Dorsolateral prefrontal cortex (tissue), 120 donors: ENCODE measurements at regions of chr11 and their contacts with region 1.

Region 1: DNA sequence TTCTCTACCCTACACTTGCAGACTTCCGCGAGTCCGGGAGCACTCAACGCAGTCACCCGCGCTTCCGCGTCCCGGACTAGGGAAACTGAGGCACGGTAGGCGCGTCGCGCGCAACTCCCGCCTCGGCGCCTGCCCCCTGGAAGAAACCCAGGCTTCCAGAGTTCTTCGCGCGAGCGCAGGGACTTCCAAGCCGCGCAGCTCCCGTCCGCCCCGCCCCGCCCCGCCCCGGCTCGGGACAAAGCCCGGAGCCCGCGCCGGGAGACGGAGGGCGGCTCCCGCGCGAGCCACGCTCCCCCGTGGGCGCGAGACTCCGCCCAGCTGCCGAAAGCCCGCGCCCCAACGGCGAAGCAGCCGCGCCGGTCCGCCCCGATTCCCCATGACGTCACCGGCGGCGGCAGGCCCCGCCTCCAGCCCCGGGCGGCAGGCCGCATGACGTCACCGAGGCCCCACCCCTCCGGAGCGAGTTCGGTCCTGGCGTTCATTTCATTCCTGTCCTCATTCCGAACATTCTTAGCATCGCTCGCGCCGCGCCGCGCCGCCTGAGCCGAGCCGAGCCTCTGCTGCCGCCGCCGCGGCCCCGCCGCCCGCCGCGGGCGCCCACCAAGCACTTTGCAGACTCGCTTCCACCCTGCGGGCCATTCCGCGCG is at the start of gene TEAD1:
- DNase-seq: peak; percentile 93 to 99 (median 96)
- H3K4me3 ChIP-seq: peak within 1 kb of the TSS; percentile 55 to 92 (median 82)
- H3K27ac ChIP-seq: peak within 1 kb of the TSS in 58 of 59 donors; percentile 42 to 95 (median 88)
- H3K27me3 ChIP-seq: no peaks in the 10 kb centered on the region
- CTCF ChIP-seq: peak in 24 of 56 donors; percentile 3 to 57 (median 22)
- total RNA-seq, gene TEAD1: 22.9 to 101 (median 43.9) TPM

Region 2: GRCh38 chr11:12100841-12101242 is 573.2 kb before region 1 on chr11:
- intact Hi-C with region 1: loop called in 1 of 2 experiments (anchors 10 kb)
- DNase-seq: peak in 9 of 10 donors; percentile 74 to 93 (median 79)
- H3K4me3 ChIP-seq: peak overlapping the region in 1 of 59 donors; percentile 25
- H3K27ac ChIP-seq: peak overlapping the region in 3 of 59 donors; percentile 42 to 52 (median 51)
- H3K27me3 ChIP-seq: peaks cover 0 to 4% (median 0%) of the 10 kb centered on the region in 45 donors
- CTCF ChIP-seq: peak in 14 of 56 donors; percentile 12 to 41 (median 24)

Region 3: DNA sequence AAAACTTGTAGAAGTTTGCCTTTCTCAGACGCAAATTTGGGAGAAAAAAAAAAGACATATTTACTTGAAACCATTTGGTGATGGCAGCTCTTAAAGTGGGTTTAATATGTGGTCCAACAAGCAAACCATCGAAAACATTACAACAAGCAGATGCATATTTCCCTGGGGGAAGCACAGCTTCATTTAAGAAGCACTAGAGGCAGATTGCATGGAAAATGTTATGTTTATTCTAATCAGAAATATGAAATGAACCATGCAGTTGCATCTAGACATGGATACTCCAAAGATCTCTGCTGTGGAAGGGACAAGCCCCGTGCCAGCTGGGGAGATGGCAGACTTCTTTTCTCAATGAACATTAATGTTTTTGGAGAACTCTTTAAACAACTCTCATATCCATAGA is 354.1 kb before region 1 on chr11:
- intact Hi-C with region 1: loop called in 1 of 2 experiments (anchors 10 kb)
- DNase-seq: no peak
- H3K4me3 ChIP-seq: no peak overlapping the region
- H3K27ac ChIP-seq: no peak overlapping the region
- H3K27me3 ChIP-seq: peaks cover 0 to 24% (median 0%) of the 10 kb centered on the region in 45 donors
- CTCF ChIP-seq: no peak

Region 4: GRCh38 chr11:12331239-12331874 is 342.7 kb before region 1 on chr11:
- intact Hi-C with region 1: loop called (anchors 2 to 10 kb)
- DNase-seq: peak; percentile 69 to 92 (median 84)
- H3K4me3 ChIP-seq: peak overlapping the region in 20 of 59 donors; percentile 0 to 48 (median 23)
- H3K27ac ChIP-seq: peak overlapping the region in 16 of 59 donors; percentile 11 to 73 (median 60)
- H3K27me3 ChIP-seq: peaks cover 0 to 11% (median 0%) of the 10 kb centered on the region in 45 donors
- CTCF ChIP-seq: peak; percentile 77 to 97 (median 88)

Region 5: DNA sequence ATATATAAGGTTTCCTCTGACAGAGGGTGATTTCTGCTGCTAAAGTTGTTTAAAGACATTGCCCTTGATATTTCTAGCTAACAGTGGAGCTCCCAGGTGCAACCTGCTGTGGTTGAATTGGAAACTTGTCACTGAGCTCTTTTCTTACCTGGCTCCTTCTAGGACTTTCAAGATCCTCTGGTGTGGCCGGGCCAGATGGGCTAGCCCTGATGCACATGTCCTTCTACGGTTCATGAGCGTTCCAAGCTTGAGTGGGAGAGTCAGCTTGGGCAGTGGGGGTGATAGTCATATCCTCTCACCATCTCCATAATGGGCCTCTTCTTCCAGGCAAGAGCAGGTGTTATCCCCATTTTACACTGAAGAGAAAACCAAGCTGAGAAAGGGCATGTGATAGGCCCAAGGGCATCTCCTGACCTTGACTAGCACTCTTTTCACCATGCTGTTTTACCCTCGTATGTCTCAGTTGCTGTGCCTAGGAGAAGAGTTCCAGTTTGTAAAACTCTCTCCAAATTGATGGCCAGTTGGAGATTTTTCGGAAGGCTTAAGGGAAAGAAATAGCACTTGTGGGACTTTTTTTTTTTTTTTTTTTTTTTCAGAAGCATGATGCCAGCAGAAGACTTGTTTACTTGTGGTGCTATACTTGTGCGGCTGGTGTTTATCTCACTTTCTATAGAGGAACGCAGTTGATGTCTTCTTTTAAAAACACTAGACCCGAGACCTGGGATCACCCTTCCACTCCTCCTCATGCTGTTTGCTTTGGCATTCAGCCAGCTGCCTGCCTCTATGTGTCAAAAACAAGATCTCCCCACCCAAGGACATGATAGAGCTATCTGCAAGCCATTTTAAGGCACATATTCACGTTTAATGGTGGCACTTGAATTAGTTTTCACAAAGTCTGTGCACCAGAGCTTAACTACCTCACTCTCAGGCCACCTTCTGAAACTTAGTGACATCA is 32.8 kb after region 1 on chr11:
- intact Hi-C with region 1: no loop called
- DNase-seq: no peak
- H3K4me3 ChIP-seq: no peak overlapping the region
- H3K27ac ChIP-seq: no peak overlapping the region
- H3K27me3 ChIP-seq: no peaks in the 10 kb centered on the region
- CTCF ChIP-seq: no peak

Region 6: GRCh38 chr11:12818333-12819015 is 144.4 kb after region 1 on chr11:
- intact Hi-C with region 1: loop called (anchors 5 to 10 kb)
- DNase-seq: no peak
- H3K4me3 ChIP-seq: no peak overlapping the region
- H3K27ac ChIP-seq: no peak overlapping the region
- H3K27me3 ChIP-seq: no peaks in the 10 kb centered on the region
- CTCF ChIP-seq: no peak

Region 7: GRCh38 chr11:12827929-12828812 is 154.1 kb after region 1 on chr11:
- intact Hi-C with region 1: loop called in 1 of 2 experiments (anchors 10 kb)
- DNase-seq: peak in 6 of 10 donors; percentile 23 to 65 (median 55)
- H3K4me3 ChIP-seq: peak overlapping the region in 58 of 59 donors; percentile 1 to 65 (median 42)
- H3K27ac ChIP-seq: peak overlapping the region in 45 of 59 donors; percentile 5 to 77 (median 58)
- H3K27me3 ChIP-seq: no peaks in the 10 kb centered on the region
- CTCF ChIP-seq: peak in 16 of 56 donors; percentile 8 to 44 (median 26)